Activated CD4-positive, alpha-beta T cell treated with anti-CD3 and anti-CD28 coated beads, Interleukin-2, amount 10 ng/mL, durations not matched to agents 7 days and 5 days (primary cell): ENCODE measurements at regions of chr6 and their contacts with region 1.

Region 1: GRCh38 chr6:319177-320131 is 27.2 kb downstream of the DUSP22 start:
- DNase-seq: no peak
- H3K4me3 Mint-ChIP-seq: no peak overlapping the region
- H3K27ac Mint-ChIP-seq: no peak overlapping the region
- H3K4me1 Mint-ChIP-seq: peaks cover 22% of the 10 kb centered on the region
- H3K27me3 Mint-ChIP-seq: no peaks in the 10 kb centered on the region

Region 2: GRCh38 chr6:336159-337019 is 16.9 kb after region 1 on chr6:
- CTCF ChIA-PET with region 1: interaction called, 10 read pairs
- POLR2A ChIA-PET with region 1: interaction called, 3 read pairs
- DNase-seq: peak; percentile 49
- H3K4me3 Mint-ChIP-seq: peak overlapping the region; percentile 22
- H3K27ac Mint-ChIP-seq: peak overlapping the region; percentile 86
- H3K4me1 Mint-ChIP-seq: peaks cover 59% of the 10 kb centered on the region
- H3K27me3 Mint-ChIP-seq: no peaks in the 10 kb centered on the region

Region 3: GRCh38 chr6:393391-394221 is 74.2 kb after region 1 on chr6:
- CTCF ChIA-PET with region 1: no interaction called
- POLR2A ChIA-PET with region 1: no interaction called
- DNase-seq: peak; percentile 36
- H3K4me3 Mint-ChIP-seq: peak overlapping the region; percentile 91
- H3K27ac Mint-ChIP-seq: peak overlapping the region; percentile 95
- H3K4me1 Mint-ChIP-seq: peaks cover 67% of the 10 kb centered on the region
- H3K27me3 Mint-ChIP-seq: no peaks in the 10 kb centered on the region